ENCODE measurements at regions of chr11 and their contacts with region 1.

Region 1: DNA sequence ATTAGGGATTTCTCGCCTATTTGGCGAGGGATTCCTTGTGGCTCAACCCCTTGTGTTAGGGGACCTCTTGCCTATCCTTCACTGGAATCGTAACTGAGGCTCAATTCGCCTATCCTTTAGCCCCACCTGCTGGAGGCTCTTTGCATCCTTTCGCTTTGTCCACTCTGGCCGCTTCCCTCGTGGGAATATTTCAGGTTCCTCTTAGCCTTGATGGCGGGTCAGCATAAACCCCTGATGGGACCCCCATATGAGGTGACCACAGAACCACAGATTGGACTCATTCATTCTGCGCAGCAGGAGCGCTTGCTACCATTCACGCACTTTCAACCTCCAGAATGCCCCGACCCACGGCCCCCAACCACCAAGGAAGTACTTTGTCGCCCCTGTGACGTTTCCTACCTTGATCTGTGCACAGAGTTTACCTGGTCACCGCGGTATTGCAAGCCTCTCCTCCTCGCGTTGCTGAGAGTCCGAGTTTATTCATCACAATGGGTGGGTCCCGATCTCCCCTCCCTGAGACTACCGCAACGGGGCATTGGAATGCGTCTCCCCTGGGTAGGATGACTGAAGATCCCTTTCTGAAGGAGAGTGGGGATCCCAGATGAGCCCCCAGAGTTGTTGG is at the start of gene OR52N2:
- DNase-seq: peak; percentile 53
- ATAC-seq: peak; percentile 98
- H3K4me3 ChIP-seq: peak within 1 kb of the TSS; percentile 68
- H3K27ac ChIP-seq: no peak within 1 kb of the TSS
- H3K4me1 ChIP-seq: no peaks in the 10 kb centered on the region
- H3K27me3 ChIP-seq: no peaks in the 10 kb centered on the region
- CTCF ChIP-seq: peak; percentile 78 to 92 (median 83)
- EP300 ChIP-seq: no peak
- POLR2A ChIP-seq: no peak
- RAD21 ChIP-seq: peak; percentile 97
- polyA plus RNA-seq, gene OR52N2: 0.24 to 0.40 TPM

Region 2: DNA sequence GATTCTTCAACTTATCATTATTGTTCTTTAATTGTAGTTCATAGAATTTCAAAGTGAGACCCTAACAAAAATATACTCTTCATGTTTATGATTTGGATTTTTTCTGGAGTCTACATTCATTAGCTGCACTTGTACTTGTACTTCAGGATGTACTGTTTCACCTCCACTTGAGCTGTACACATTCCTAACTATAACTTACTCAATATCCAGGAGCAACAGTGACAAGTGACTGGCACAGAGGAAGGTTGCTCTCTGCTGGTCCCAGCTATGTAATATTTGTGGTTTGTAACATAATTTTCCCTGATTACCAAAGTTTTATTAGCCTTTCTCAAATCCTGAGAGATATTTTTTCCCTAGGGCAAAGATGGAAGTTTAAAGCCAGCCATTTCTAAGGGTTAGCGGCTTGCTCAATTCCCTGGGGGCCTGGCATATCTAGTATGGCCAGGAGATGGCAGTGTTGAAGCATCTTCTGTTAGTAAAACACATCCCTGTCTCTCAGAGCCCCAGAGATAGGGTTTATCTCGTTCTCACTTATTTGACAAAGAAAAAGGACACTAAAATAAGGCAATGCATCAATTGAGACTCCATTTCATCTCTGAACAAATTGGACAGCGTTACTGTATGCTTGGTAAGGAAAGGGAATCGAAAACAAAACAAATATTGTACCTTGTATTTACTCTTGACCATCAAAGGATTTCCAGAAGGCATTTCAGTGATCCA is 684.6 kb before region 1 on chr11:
- CTCF ChIA-PET with region 1: no interaction called
- POLR2A ChIA-PET with region 1: no interaction called
- RAD21 ChIA-PET with region 1: no interaction called
- SMC1A ChIA-PET with region 1: no interaction called
- in situ Hi-C with region 1: no loop called
- intact Hi-C with region 1: loop called (anchors 2 kb)
- DNase-seq: peak; percentile 13
- ATAC-seq: peak; percentile 90
- H3K4me3 ChIP-seq: no peak overlapping the region
- H3K27ac ChIP-seq: no peak overlapping the region
- H3K4me1 ChIP-seq: no peaks in the 10 kb centered on the region
- H3K27me3 ChIP-seq: no peaks in the 10 kb centered on the region
- CTCF ChIP-seq: peak; percentile 73 to 82 (median 77)
- EP300 ChIP-seq: no peak
- POLR2A ChIP-seq: no peak
- RAD21 ChIP-seq: peak; percentile 69

Region 3: DNA sequence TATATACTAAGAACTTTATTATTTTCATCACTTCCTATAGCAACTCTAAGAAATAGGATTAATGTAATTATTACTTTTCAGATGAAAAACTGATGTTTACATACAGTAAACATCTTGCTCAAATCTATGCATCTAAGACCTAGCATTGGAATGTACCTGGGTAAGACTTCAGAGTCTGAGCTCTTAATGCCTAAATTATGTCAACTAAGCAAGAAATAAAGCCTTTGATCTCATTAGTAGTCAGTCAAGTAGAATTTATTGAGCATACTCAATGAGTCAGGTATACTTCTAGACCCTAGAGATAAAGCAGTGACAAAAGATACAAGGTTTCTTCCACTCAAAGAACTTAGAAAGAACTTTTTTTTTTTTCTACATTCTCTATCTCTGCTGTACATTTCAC is 403.4 kb before region 1 on chr11:
- CTCF ChIA-PET with region 1: no interaction called
- POLR2A ChIA-PET with region 1: no interaction called
- RAD21 ChIA-PET with region 1: no interaction called
- SMC1A ChIA-PET with region 1: no interaction called
- in situ Hi-C with region 1: no loop called
- intact Hi-C with region 1: loop called (anchors 5 kb)
- DNase-seq: no peak
- ATAC-seq: no peak
- H3K4me3 ChIP-seq: no peak overlapping the region
- H3K27ac ChIP-seq: no peak overlapping the region
- H3K4me1 ChIP-seq: no peaks in the 10 kb centered on the region
- H3K27me3 ChIP-seq: no peaks in the 10 kb centered on the region
- CTCF ChIP-seq: no peak
- EP300 ChIP-seq: no peak
- POLR2A ChIP-seq: no peak
- RAD21 ChIP-seq: no peak

Region 4: DNA sequence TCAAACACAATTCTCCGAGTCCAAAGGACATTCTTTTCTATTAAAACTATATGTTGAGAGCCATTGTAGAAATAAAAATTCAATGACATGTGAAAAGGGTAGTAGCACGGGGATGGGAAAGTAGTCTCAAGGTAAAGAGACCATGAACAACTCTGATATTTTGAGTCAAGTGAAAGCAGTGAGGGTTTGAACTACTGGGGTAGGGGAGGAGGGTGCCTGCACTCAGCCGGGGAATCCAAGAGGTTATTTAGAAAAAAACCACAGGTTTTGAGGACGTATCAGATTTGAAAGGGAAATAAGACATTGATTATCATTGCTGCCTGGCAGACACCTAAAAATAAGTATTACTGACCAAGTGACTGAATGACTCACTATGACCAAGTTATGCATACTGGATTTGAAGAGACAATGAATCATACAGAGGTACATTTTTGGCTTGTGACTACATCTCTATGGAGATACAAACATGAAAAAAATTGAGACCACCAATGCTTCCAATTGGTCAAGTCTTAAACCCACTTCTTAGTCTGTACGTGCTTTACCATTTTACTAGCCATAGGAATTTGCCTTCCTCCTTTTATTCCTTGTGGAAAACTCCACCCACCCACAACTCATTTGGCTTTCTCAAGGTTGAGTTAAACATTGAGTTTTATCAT is 258.0 kb before region 1 on chr11:
- CTCF ChIA-PET with region 1: interaction called, 3 read pairs
- POLR2A ChIA-PET with region 1: no interaction called
- RAD21 ChIA-PET with region 1: no interaction called
- SMC1A ChIA-PET with region 1: no interaction called
- in situ Hi-C with region 1: no loop called
- intact Hi-C with region 1: loop called (anchors 5 kb)
- DNase-seq: peak; percentile 8
- ATAC-seq: peak; percentile 78
- H3K4me3 ChIP-seq: no peak overlapping the region
- H3K27ac ChIP-seq: no peak overlapping the region
- H3K4me1 ChIP-seq: no peaks in the 10 kb centered on the region
- H3K27me3 ChIP-seq: no peaks in the 10 kb centered on the region
- CTCF ChIP-seq: no peak
- EP300 ChIP-seq: peak in 1 of 2 experiments; percentile 27; a peak in 1 of 4 replicates
- POLR2A ChIP-seq: no peak
- RAD21 ChIP-seq: no peak

Region 5: DNA sequence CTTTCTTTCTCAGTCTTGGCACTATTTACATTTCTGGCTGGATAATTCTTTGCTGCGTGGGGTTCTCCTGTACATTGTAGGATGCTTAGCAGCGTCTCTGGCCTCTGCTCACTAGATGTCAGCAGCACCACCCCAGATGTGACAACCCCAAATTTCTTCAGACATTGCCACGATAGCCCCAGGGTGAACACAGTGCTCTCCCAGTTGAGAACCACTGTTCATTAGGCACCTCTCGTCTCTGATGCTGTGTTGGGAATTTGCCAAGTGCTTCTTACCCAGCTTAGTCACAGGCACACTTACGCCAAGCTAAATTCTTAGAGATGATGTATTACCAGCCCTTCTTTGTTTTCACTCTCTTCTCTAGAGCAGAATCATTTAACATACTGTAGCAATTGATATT is 202.8 kb before region 1 on chr11:
- CTCF ChIA-PET with region 1: interaction called, 23 read pairs
- POLR2A ChIA-PET with region 1: no interaction called
- RAD21 ChIA-PET with region 1: interaction called, 8 read pairs
- SMC1A ChIA-PET with region 1: interaction called, 10 read pairs
- in situ Hi-C with region 1: loop called (anchors 5 kb)
- intact Hi-C with region 1: no loop called
- DNase-seq: no peak
- ATAC-seq: peak; percentile 77
- H3K4me3 ChIP-seq: no peak overlapping the region
- H3K27ac ChIP-seq: no peak overlapping the region
- H3K4me1 ChIP-seq: no peaks in the 10 kb centered on the region; the same call in 1 of the 2 replicates
- H3K27me3 ChIP-seq: no peaks in the 10 kb centered on the region
- CTCF ChIP-seq: peak; percentile 23 to 45 (median 32); a peak in 4 of 6 replicates
- EP300 ChIP-seq: no peak
- POLR2A ChIP-seq: no peak
- RAD21 ChIP-seq: 0 out of 2 replicates have a peak, but pooled peaks have one; percentile 18